A673 (cell line): ENCODE measurements at regions of chr13 and their contacts with region 1.

Region 1: GRCh38 chr13:33494596-33495204 is 209.1 kb upstream of the STARD13 start:
- DNase-seq: peak; percentile 96
- H3K4me3 ChIP-seq: no peak overlapping the region
- H3K27ac ChIP-seq: peak overlapping the region; percentile 78
- H3K4me1 ChIP-seq: peaks cover 61% of the 10 kb centered on the region
- H3K27me3 ChIP-seq: no peaks in the 10 kb centered on the region
- CTCF ChIP-seq: no peak

Region 2: GRCh38 chr13:33174931-33175330 is 319.8 kb before region 1 on chr13:
- CTCF ChIA-PET with region 1: no interaction called
- POLR2A ChIA-PET with region 1: no interaction called
- intact Hi-C with region 1: loop called (anchors 5 kb)
- DNase-seq: no peak
- H3K4me3 ChIP-seq: no peak overlapping the region
- H3K27ac ChIP-seq: peak overlapping the region; percentile 96
- H3K4me1 ChIP-seq: peaks cover 89% of the 10 kb centered on the region
- H3K27me3 ChIP-seq: no peaks in the 10 kb centered on the region
- CTCF ChIP-seq: no peak

Region 3: GRCh38 chr13:33204130-33204927 is 290.4 kb before region 1 on chr13:
- CTCF ChIA-PET with region 1: no interaction called
- POLR2A ChIA-PET with region 1: no interaction called
- intact Hi-C with region 1: loop called (anchors 10 kb)
- DNase-seq: peak; percentile 93
- H3K4me3 ChIP-seq: peak overlapping the region; percentile 56
- H3K27ac ChIP-seq: peak overlapping the region; percentile 84
- H3K4me1 ChIP-seq: peaks cover 72% of the 10 kb centered on the region
- H3K27me3 ChIP-seq: no peaks in the 10 kb centered on the region
- CTCF ChIP-seq: no peak

Region 4: GRCh38 chr13:33307843-33308242 is 186.9 kb before region 1 on chr13:
- CTCF ChIA-PET with region 1: no interaction called
- POLR2A ChIA-PET with region 1: no interaction called
- intact Hi-C with region 1: no loop called
- DNase-seq: no peak
- H3K4me3 ChIP-seq: no peak overlapping the region
- H3K27ac ChIP-seq: no peak overlapping the region
- H3K4me1 ChIP-seq: peaks cover 22% of the 10 kb centered on the region
- H3K27me3 ChIP-seq: no peaks in the 10 kb centered on the region
- CTCF ChIP-seq: no peak

Region 5: DNA sequence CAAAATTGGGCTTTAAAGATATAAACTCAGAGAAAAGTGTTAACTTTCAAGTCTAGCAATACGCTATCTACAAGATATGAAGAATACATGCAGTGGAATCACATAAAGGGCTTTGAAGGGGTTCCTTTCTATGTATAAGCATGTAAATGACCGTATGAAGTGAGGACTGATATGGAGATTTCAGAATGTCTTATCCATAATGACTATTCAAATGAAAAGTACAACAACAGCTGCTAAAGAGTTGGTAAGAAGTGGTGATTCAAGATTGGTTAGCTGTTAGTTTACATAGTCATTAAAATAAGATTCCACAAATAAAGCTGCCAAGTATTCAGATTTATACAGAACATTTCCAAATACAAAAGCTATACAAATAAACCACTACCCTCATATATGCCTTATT is 55.8 kb before region 1 on chr13:
- CTCF ChIA-PET with region 1: interaction called, 4 read pairs
- POLR2A ChIA-PET with region 1: no interaction called
- intact Hi-C with region 1: loop called (anchors 2 kb)
- DNase-seq: no peak
- H3K4me3 ChIP-seq: no peak overlapping the region
- H3K27ac ChIP-seq: peak overlapping the region; percentile 96
- H3K4me1 ChIP-seq: peaks cover 47% of the 10 kb centered on the region
- H3K27me3 ChIP-seq: no peaks in the 10 kb centered on the region
- CTCF ChIP-seq: no peak